Activated naive CD4-positive, alpha-beta T cell treated with anti-CD3 and anti-CD28 coated beads for 36 hours (primary cell): ENCODE measurements at regions of chr1 and their contacts with region 1.

Region 1: DNA sequence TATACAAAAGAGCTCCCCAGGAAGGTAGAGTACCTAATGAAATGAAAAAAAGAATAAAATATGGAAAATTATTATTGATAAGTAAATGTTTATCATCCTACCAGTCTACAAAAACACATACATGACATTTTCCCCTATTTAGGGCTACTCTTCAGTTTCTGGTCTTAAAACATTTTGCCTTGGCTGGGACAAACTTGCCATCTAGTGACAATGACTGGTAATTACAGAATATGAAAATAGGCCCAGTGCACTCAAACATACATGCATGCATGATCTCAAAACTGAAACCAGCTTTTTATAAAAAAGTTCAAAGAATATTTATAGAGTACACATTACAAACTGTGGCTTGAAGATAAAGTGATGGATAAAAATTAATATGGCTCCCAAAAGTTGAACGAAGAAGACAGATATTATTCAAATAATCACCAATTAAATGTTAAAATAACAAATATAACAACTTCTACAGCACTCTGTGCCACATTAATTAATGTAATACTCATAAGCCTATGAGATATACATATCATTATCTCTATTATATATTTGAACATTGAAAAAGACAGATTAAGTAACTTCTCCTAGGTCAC is 10.5 kb upstream of the RNPC3 start:
- DNase-seq: peak; percentile 8
- H3K4me3 Mint-ChIP-seq: no peak overlapping the region
- H3K27ac Mint-ChIP-seq: peak overlapping the region; percentile 76
- H3K4me1 Mint-ChIP-seq: peaks cover 24% of the 10 kb centered on the region
- H3K27me3 Mint-ChIP-seq: no peaks in the 10 kb centered on the region

Region 2: GRCh38 chr1:101520302-101520701 is 1994.7 kb before region 1 on chr1:
- CTCF ChIA-PET with region 1: no interaction called
- intact Hi-C with region 1: loop called (anchors 5 kb)
- DNase-seq: peak; percentile 28
- H3K4me3 Mint-ChIP-seq: no peak overlapping the region
- H3K27ac Mint-ChIP-seq: no peak overlapping the region
- H3K4me1 Mint-ChIP-seq: peaks cover 2% of the 10 kb centered on the region
- H3K27me3 Mint-ChIP-seq: no peaks in the 10 kb centered on the region

Region 3: DNA sequence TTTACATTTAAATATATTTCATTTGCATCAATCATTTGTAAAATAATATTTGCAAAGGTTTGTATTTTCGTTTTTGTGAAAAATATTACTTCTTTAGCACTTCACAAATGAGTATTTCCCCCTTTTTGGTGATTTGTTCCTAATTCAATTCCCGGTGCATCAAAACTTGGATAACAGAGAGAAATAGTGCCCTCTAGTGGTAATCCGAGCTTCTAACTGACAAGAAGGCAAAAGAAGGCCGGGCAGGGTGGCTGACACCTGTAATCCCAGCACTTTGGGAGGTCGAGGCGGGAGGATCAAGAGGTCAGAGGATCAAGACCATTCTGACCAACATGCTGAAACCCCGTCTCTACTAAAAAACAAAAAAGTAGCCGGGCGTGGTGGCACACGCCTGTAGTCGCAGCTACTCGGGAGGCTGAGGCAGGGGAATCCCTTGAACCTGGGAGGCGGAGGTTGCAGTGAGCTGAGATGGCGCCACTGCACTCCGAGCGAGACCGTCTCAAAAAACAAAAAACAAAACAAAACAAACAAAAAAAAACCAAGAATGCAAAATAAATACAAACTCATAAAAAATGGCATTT is 544.4 kb before region 1 on chr1:
- CTCF ChIA-PET with region 1: no interaction called
- intact Hi-C with region 1: loop called (anchors 10 kb)
- DNase-seq: peak; percentile 6
- H3K4me3 Mint-ChIP-seq: no peak overlapping the region
- H3K27ac Mint-ChIP-seq: no peak overlapping the region
- H3K4me1 Mint-ChIP-seq: no peaks in the 10 kb centered on the region
- H3K27me3 Mint-ChIP-seq: no peaks in the 10 kb centered on the region

Region 4: DNA sequence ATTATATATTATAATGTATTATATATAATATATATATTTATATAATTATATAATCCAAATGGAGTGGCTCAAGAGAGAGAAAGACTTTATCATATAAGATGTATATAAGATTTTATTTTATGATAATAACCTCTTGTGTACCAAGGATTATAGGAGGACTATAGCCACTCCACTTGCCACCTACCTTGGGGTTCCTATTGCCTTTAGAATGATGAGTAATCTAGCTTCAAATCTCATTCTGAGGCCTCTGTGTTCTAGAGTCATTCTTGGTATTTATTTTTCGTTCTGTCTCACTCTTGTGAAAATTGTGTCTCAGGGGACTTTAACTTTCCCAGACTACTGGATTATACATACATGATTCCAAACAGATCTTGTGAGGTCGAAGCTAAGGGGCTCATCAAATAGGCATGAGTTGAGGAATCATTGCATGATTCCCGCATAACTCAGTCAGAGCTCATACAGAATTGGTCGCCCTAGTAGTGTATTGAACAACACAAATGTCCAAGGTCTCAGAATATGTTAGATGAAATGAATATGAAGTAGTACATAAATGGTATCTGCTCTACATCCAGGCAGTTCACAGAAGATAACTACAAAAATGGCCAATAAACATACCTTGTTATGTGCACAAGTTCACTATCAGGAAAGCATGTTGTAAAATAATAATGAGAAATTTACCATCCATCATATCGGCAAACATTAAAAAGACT is 149.0 kb before region 1 on chr1:
- CTCF ChIA-PET with region 1: no interaction called
- intact Hi-C with region 1: loop called (anchors 10 kb)
- DNase-seq: no peak
- H3K4me3 Mint-ChIP-seq: no peak overlapping the region
- H3K27ac Mint-ChIP-seq: no peak overlapping the region
- H3K4me1 Mint-ChIP-seq: no peaks in the 10 kb centered on the region
- H3K27me3 Mint-ChIP-seq: no peaks in the 10 kb centered on the region

Region 5: GRCh38 chr1:103461161-103462105 is 53.6 kb before region 1 on chr1:
- CTCF ChIA-PET with region 1: interaction called, 5 read pairs
- intact Hi-C with region 1: loop called (anchors 1 kb)
- DNase-seq: no peak
- H3K4me3 Mint-ChIP-seq: no peak overlapping the region
- H3K27ac Mint-ChIP-seq: no peak overlapping the region
- H3K4me1 Mint-ChIP-seq: no peaks in the 10 kb centered on the region
- H3K27me3 Mint-ChIP-seq: no peaks in the 10 kb centered on the region

Region 6: GRCh38 chr1:103541431-103541830 is 26.4 kb after region 1 on chr1:
- CTCF ChIA-PET with region 1: no interaction called
- intact Hi-C with region 1: no loop called
- DNase-seq: no peak
- H3K4me3 Mint-ChIP-seq: no peak overlapping the region
- H3K27ac Mint-ChIP-seq: no peak overlapping the region
- H3K4me1 Mint-ChIP-seq: no peaks in the 10 kb centered on the region
- H3K27me3 Mint-ChIP-seq: no peaks in the 10 kb centered on the region